Naive thymus-derived CD4-positive, alpha-beta T cell (primary cell): ENCODE measurements at regions of chr1 and their contacts with region 1.

Region 1: GRCh38 chr1:207321079-207321789 is at the start of gene CD55:
- DNase-seq: peak; percentile 92 to 100 (median 100)
- ATAC-seq: peak; percentile 95
- H3K4me3 ChIP-seq: peak within 1 kb of the TSS; percentile 88
- H3K4me3 Mint-ChIP-seq: peak within 1 kb of the TSS; percentile 90 to 99 (median 96)
- H3K27ac ChIP-seq: peak within 1 kb of the TSS; percentile 99
- H3K27ac Mint-ChIP-seq: peak within 1 kb of the TSS; percentile 99 to 100 (median 100)
- H3K4me1 ChIP-seq: peaks cover 6 to 13% of the 10 kb centered on the region in 2 donors
- H3K4me1 Mint-ChIP-seq: peaks cover 25 to 64% (median 50%) of the 10 kb centered on the region in 7 donors
- H3K27me3 ChIP-seq: no peaks in the 10 kb centered on the region
- H3K27me3 Mint-ChIP-seq: peaks cover 0 to 3% (median 0%) of the 10 kb centered on the region in 5 donors
- total RNA-seq, gene CD55: 122 to 264 (median 134) TPM

Region 2: DNA sequence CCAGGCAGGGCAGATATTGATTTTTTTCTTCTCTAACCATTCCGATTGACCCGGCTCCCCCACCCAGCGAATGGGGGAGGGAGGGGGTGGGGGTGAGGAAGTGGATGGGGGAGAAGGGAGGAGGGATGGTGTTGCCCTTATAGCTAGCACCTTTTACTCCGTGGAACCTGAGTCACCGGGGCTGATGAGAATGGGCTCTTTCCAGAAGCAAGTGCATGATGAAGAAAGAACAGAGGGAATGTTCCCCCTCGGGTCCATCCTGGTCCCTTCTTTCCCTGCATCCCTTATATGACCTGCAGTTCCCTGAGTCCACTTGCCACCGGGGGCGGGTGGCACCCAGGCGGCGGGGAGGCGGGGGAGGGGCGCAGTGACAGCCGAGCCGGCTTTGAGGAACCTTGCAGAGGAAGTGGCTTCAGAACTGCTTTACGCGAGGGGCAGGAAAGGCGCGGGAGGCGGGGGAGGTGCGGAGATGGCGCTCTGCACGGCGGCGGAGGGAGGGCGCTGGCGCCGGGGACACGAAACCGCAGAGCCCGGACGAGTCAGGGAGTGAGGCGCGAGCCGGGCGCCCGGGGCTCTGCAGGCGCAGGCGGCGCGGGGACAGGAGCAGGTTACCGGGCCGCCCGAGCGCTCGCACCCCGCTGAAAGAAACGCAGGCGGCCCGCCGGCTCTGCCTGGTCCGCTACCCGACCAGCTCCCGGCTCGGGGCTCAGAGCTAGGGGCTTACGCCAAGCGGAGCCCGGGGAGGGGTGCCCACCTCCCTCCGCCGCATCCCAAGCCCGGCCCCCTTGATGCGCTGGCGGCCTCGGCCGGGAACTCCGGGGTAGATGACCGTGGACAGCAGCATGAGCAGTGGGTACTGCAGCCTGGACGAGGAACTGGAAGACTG is 764.2 kb before region 1 on chr1:
- CTCF ChIA-PET with region 1: no interaction called
- POLR2A ChIA-PET with region 1: no interaction called
- intact Hi-C with region 1: loop called (anchors 2 to 5 kb)
- DNase-seq: peak; percentile 78 to 93 (median 88)
- ATAC-seq: peak; percentile 86
- H3K4me3 ChIP-seq: peak overlapping the region; percentile 90
- H3K4me3 Mint-ChIP-seq: peak overlapping the region; percentile 77 to 99 (median 96)
- H3K27ac ChIP-seq: peak overlapping the region; percentile 90
- H3K27ac Mint-ChIP-seq: peak overlapping the region; percentile 86 to 100 (median 94)
- H3K4me1 ChIP-seq: peaks cover 61 to 66% of the 10 kb centered on the region in 2 donors
- H3K4me1 Mint-ChIP-seq: peaks cover 59 to 75% (median 70%) of the 10 kb centered on the region in 7 donors
- H3K27me3 ChIP-seq: no peaks in the 10 kb centered on the region
- H3K27me3 Mint-ChIP-seq: no peaks in the 10 kb centered on the region

Region 3: DNA sequence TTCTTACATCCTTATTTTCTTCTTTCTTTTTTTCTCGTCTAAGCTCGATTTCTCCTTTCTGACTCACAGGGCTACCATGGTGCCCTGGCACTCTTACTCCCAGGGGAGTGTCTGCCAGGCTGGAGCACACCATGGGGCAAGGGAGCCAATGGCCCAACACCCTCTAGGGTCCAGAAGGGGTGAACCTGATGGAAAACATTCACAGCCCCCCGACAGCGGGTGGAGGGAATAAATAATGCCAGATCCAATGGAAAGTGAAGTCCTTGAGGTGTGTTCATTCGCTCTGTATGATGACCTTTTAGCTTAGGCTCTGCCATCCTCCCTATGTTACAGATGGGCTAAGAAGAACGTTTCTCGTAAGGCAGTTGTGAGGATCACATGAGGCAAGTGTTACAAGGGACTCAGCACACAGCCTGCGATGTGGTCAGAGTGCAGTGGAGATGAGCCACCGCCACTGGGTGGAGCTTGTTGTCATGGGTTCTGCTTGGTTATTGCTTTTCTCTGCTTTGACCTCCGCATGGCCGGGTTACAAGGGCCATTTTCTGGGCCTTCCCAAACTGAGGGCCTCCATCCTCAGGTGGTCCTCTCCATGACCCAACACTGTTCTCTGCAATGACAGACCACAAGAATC is 396.0 kb before region 1 on chr1:
- CTCF ChIA-PET with region 1: no interaction called
- POLR2A ChIA-PET with region 1: interaction called, 3 read pairs
- intact Hi-C with region 1: loop called (anchors 2 kb)
- DNase-seq: peak in 3 of 9 donors; percentile 25 to 38 (median 37)
- ATAC-seq: peak; percentile 62
- H3K4me3 ChIP-seq: no peak overlapping the region
- H3K4me3 Mint-ChIP-seq: no peak overlapping the region
- H3K27ac ChIP-seq: peak overlapping the region; percentile 90
- H3K27ac Mint-ChIP-seq: no peak overlapping the region
- H3K4me1 ChIP-seq: peaks cover 46 to 51% of the 10 kb centered on the region in 2 donors
- H3K4me1 Mint-ChIP-seq: peaks cover 19 to 37% (median 31%) of the 10 kb centered on the region in 7 donors
- H3K27me3 ChIP-seq: no peaks in the 10 kb centered on the region
- H3K27me3 Mint-ChIP-seq: no peaks in the 10 kb centered on the region

Region 4: GRCh38 chr1:207228987-207229386 is 92.2 kb before region 1 on chr1:
- CTCF ChIA-PET with region 1: no interaction called
- POLR2A ChIA-PET with region 1: interaction called, 12 read pairs
- intact Hi-C with region 1: no loop called
- DNase-seq: no peak
- ATAC-seq: no peak
- H3K4me3 ChIP-seq: no peak overlapping the region
- H3K4me3 Mint-ChIP-seq: no peak overlapping the region
- H3K27ac ChIP-seq: no peak overlapping the region
- H3K27ac Mint-ChIP-seq: no peak overlapping the region
- H3K4me1 ChIP-seq: no peaks in the 10 kb centered on the region
- H3K4me1 Mint-ChIP-seq: no peaks in the 10 kb centered on the region
- H3K27me3 ChIP-seq: no peaks in the 10 kb centered on the region
- H3K27me3 Mint-ChIP-seq: peaks cover 0 to 11% (median 0%) of the 10 kb centered on the region in 5 donors

Region 5: DNA sequence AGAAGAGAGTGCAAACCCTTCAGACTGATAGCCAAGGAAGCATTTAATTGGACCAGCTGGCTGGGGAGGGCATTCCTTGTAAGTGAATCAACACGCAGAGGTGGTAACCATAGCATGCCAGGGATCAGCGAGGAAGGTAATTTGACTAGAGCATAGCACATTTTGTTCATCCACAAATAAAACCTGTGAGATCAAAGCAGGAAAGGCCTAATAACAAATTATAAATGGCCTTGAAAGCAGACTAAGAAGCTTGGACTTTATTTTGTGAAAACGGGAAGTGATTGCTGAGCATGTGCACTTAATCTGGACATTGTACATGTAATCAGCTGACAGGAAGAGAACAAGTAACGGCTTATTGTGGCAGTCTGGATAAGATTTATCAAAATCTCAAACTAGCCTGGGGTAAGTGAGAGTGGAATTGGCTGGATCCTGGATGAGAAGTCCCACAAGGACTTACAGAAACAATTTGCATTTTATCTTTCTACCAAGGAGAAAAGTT is 11.4 kb before region 1 on chr1:
- CTCF ChIA-PET with region 1: interaction called, 3 read pairs
- POLR2A ChIA-PET with region 1: interaction called, 45 read pairs
- intact Hi-C with region 1: loop called in 1 of 2 experiments (anchors 1 kb)
- DNase-seq: no peak
- ATAC-seq: peak; percentile 37
- H3K4me3 ChIP-seq: no peak overlapping the region
- H3K4me3 Mint-ChIP-seq: peak overlapping the region; percentile 6 to 77 (median 62)
- H3K27ac ChIP-seq: peak overlapping the region; percentile 15
- H3K27ac Mint-ChIP-seq: peak overlapping the region; percentile 2 to 96 (median 63)
- H3K4me1 ChIP-seq: peaks cover 5 to 18% of the 10 kb centered on the region in 2 donors
- H3K4me1 Mint-ChIP-seq: peaks cover 14 to 28% (median 23%) of the 10 kb centered on the region in 7 donors
- H3K27me3 ChIP-seq: no peaks in the 10 kb centered on the region
- H3K27me3 Mint-ChIP-seq: peaks cover 0 to 9% (median 0%) of the 10 kb centered on the region in 5 donors

Region 6: DNA sequence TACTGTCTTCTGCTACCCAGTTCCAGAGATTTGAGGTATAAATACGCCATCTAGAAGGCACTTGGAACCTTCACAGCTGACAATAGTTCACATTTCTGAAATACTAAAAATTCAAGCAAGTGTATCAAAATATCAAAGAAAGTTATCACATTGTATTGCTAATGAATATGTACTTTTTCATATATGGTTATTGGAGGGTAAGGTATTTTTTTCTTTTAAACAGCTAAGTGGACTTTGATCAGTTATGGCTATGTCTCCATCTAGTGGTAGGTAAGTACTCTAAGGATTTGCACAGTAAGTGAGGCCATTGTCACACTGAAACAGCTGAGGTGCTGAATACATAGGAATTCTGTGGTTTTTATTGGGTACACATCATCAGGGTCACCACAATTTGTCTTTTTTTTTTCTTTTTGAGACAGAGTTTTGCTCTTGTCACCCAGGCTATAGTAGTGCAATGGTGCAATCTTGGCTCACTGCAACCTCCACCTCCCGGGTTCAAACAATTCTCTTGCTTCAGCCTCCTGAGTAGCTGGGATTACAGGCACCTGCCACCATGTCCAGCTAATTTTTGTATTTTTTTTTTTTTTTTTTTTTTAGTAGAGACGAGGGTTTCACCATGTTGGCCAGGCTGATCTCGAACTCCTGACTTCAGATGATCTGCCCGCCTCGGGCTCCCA is 83.8 kb after region 1 on chr1:
- CTCF ChIA-PET with region 1: interaction called, 5 read pairs
- POLR2A ChIA-PET with region 1: interaction called, 7 read pairs
- intact Hi-C with region 1: loop called (anchors 1 to 5 kb)
- DNase-seq: peak in 7 of 9 donors; percentile 25 to 69 (median 56)
- ATAC-seq: peak; percentile 89
- H3K4me3 ChIP-seq: no peak overlapping the region
- H3K4me3 Mint-ChIP-seq: no peak overlapping the region
- H3K27ac ChIP-seq: no peak overlapping the region
- H3K27ac Mint-ChIP-seq: no peak overlapping the region
- H3K4me1 ChIP-seq: no peaks in the 10 kb centered on the region
- H3K4me1 Mint-ChIP-seq: peaks cover 0 to 13% (median 0%) of the 10 kb centered on the region in 7 donors
- H3K27me3 ChIP-seq: no peaks in the 10 kb centered on the region
- H3K27me3 Mint-ChIP-seq: peaks cover 0 to 3% (median 0%) of the 10 kb centered on the region in 5 donors

Region 7: DNA sequence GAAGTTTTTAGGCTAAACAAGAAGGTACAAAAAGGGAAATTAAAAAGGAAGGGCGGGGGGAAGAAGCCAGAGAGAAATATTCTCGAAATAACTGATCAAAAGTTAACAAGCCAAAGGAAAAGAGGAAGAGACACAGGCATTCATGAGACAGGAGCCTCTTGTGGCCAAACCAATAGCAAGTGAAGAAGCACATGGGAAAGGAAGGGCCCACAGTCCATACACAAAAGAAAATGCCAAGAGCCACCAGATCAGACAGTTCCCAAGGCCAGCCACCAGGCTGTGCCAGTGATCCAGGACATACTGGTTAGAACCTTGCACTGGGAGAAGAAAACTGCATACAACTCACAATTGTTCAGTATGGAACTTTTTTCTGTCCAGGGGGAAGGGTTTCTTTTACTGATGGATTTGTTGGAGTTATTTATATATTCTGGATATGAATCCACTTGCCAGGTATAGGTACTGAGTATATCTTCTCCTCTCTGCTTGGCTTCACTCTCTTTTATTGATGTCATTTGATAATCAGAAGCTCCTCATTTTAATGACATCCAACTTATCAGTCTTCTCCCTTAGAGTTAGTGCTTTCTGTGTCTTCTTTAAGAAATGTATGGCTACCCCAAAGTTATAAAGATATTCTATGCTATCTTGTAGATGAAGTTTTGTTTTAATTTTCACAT is 507.4 kb after region 1 on chr1:
- CTCF ChIA-PET with region 1: no interaction called
- POLR2A ChIA-PET with region 1: no interaction called
- intact Hi-C with region 1: loop called (anchors 5 kb)
- DNase-seq: peak; percentile 39 to 69 (median 57)
- ATAC-seq: peak; percentile 40
- H3K4me3 ChIP-seq: no peak overlapping the region
- H3K4me3 Mint-ChIP-seq: peak overlapping the region in 3 of 10 donors; percentile 1 to 21 (median 9)
- H3K27ac ChIP-seq: peak overlapping the region; percentile 26
- H3K27ac Mint-ChIP-seq: peak overlapping the region; percentile 43 to 100 (median 96)
- H3K4me1 ChIP-seq: peaks cover 36 to 75% of the 10 kb centered on the region in 2 donors
- H3K4me1 Mint-ChIP-seq: peaks cover 82 to 99% (median 97%) of the 10 kb centered on the region in 7 donors
- H3K27me3 ChIP-seq: no peaks in the 10 kb centered on the region
- H3K27me3 Mint-ChIP-seq: peaks cover 0 to 5% (median 0%) of the 10 kb centered on the region in 5 donors